Activated CD8-positive, alpha-beta memory T cell treated with anti-CD3 and anti-CD28 coated beads, Interleukin-2, amount 10 ng/mL, durations not matched to agents 7 days and 5 days (primary cell): ENCODE measurements at regions of chr20 and their contacts with region 1.

Region 1: DNA sequence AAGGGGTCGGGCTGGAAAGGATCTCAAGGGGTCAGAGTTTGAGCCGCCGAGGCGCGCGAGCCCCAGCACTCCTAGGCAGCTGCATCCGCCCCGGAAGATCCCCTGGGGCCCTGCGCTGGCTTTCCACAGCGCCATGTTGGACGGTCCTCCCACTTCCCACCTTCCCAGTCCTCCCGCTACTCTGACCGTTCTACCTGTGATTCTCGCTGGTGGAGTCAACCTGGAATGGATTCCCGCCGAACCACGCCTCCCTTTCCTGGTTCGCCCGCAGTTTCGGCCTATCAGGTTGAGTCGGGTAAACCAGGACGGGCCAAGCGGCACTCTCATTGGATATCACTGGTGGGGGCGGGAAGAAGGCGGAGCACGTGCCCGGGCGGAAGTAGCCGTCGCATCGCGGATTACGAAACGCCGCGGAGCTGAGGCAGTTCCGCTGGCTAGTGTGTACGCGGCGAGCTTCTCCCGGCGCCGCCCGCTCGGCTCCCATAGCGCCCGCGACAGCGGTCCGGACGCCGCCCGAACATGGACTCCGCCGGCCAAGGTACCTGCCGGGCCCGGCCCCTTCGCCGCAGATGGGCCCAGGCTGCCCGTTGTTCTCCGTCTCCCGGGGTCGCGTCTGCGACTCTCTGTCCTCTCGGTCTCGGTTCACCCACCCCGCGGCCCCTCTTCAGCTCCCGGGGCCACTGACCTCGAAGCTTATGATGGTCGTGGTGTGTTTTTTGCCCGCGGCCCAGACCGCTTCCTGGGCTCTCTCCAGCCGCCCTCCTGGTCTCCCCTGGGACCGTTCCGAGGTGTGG is at the start of gene TPD52L2:
- DNase-seq: peak; percentile 99
- ATAC-seq: peak; percentile 91
- H3K4me3 Mint-ChIP-seq: peak within 1 kb of the TSS; percentile 82
- H3K27ac Mint-ChIP-seq: peak within 1 kb of the TSS; percentile 84
- H3K4me1 Mint-ChIP-seq: peaks cover 24% of the 10 kb centered on the region
- H3K27me3 Mint-ChIP-seq: no peaks in the 10 kb centered on the region
- total RNA-seq, gene TPD52L2: 33.5 to 46.2 TPM

Region 2: DNA sequence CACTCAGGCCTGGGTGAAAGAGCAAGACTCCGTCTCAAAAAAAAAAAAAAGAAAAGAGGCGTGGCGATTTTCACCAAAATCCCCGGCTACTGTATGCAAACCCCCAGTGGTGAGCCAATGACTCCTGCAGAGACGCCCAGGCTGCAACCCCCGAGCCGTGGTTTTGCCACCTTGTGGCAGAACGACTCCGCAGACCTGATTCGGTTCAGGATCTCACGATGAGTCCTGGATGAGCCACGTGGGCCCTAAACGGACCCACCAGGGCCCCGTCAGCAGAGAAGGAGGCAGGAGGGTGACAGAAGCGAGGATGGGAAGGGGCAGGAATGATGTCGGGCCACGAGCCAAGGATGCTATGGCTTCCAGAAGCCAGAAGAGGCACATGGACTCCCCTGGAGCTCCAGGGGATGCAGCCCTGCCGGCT is 83.0 kb before region 1 on chr20:
- CTCF ChIA-PET with region 1: interaction called, 10 read pairs
- DNase-seq: peak; percentile 80
- ATAC-seq: peak; percentile 89
- H3K4me3 Mint-ChIP-seq: no peak overlapping the region
- H3K27ac Mint-ChIP-seq: no peak overlapping the region
- H3K4me1 Mint-ChIP-seq: peaks cover 18% of the 10 kb centered on the region
- H3K27me3 Mint-ChIP-seq: no peaks in the 10 kb centered on the region

Region 3: GRCh38 chr20:63804308-63804636 is 60.8 kb before region 1 on chr20:
- CTCF ChIA-PET with region 1: no interaction called
- DNase-seq: no peak
- ATAC-seq: no peak
- H3K4me3 Mint-ChIP-seq: no peak overlapping the region
- H3K27ac Mint-ChIP-seq: no peak overlapping the region
- H3K4me1 Mint-ChIP-seq: peaks cover 3% of the 10 kb centered on the region
- H3K27me3 Mint-ChIP-seq: peaks cover 11% of the 10 kb centered on the region

Region 4: GRCh38 chr20:63819224-63819921 is 45.7 kb before region 1 on chr20:
- CTCF ChIA-PET with region 1: no interaction called
- DNase-seq: no peak
- ATAC-seq: no peak
- H3K4me3 Mint-ChIP-seq: peak overlapping the region; percentile 32
- H3K27ac Mint-ChIP-seq: no peak overlapping the region
- H3K4me1 Mint-ChIP-seq: no peaks in the 10 kb centered on the region
- H3K27me3 Mint-ChIP-seq: peaks cover 17% of the 10 kb centered on the region

Region 5: GRCh38 chr20:63835021-63835858 is 29.8 kb before region 1 on chr20:
- CTCF ChIA-PET with region 1: no interaction called
- DNase-seq: no peak
- ATAC-seq: no peak
- H3K4me3 Mint-ChIP-seq: no peak overlapping the region
- H3K27ac Mint-ChIP-seq: no peak overlapping the region
- H3K4me1 Mint-ChIP-seq: no peaks in the 10 kb centered on the region
- H3K27me3 Mint-ChIP-seq: peaks cover 21% of the 10 kb centered on the region

Region 6: DNA sequence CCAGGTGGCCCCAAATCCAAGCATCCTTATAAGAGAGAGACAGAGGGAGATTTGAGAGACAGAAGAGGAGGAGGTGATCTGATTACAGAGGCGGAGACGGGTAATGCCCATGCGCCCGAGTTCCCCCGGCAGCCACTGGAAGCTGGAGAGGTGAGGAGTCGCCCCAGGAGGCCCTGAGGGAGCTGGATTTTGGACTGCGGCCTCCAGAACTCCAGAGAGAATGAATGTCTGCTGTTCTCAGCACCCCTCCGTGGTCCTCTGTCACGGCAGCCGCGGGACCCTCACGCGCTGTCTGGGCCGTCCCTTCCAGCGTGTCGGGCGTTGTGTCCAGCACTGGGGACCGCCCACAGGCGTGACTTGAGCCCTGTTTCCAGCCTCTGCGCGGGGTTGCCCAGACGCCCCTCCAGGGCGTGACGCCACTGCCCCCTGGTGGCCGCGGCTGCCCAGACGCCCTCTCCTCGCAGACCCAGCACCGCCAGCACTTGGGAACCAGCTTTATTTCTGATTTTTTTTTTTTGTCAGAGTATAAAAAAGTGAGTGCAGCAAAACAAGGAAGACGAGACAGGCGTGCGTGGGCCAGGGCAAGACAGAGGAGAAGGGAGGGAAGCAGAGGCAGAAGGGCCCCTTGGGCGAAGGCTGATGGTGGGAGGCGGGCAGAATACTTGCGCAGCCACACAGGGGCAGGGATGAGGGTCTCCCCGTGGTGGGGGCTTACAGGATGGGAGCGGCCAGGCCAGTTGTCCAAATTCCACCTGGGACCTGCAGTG is 108.8 kb after region 1 on chr20:
- CTCF ChIA-PET with region 1: interaction called, 11 read pairs
- DNase-seq: peak; percentile 80
- ATAC-seq: peak; percentile 40
- H3K4me3 Mint-ChIP-seq: no peak overlapping the region
- H3K27ac Mint-ChIP-seq: peak overlapping the region; percentile 70
- H3K4me1 Mint-ChIP-seq: peaks cover 42% of the 10 kb centered on the region
- H3K27me3 Mint-ChIP-seq: peaks cover 3% of the 10 kb centered on the region